WTC11 (cell line): ENCODE measurements at regions of chr11 and their contacts with region 1.

Region 1: DNA sequence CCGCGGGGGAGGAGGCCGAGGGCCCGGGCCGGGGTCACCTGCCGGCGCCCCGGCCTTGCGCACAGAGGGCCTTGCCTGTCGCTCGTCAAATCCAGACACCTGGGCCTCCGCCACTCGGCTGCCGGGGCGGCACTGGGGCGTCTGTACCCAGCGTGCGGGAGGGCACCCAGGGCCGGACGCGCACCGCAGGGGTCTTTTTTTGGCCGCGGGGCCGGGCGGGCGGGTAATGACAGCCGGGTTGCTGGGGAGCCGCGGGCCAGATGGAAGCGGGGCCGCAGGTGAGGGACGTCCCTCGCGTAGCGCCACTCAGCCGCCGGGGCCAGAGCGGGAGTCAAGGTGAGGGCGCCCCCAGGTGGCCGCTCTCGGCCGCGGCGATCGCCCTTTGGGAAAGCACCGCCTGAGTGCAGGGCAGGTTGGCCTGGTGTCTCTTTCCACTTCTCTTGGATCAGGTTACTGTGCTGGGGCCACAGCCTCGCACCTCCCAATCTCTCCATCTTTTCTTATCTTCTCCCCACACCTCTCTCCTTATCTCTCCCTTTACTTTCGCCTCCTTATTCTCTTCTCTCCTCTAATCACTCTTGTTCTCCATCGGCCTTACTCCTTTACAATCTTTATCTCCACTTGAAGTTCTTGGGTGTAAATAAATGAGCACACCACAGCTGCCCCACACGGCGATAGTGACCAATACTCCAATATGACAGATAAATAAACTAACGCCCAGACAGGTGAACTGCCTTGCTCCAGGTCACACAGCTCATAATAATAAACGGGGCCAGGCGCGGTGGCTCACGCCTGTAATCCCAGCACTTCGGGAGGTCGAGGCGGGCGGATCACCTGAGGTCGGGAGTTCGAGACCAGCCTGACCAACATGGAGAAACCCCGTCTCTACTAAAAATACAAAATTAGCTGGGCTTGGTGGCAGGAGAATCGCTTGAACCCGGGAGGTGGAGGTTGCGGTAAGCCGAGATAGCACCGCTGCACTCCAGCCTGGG is 3.7 kb downstream of the PHLDB1 start:
- DNase-seq: peak; percentile 95
- ATAC-seq: peak; percentile 41
- H3K4me3 Mint-ChIP-seq: peak overlapping the region; percentile 57
- H3K27ac Mint-ChIP-seq: no peak overlapping the region
- H3K4me1 Mint-ChIP-seq: peaks cover 60% of the 10 kb centered on the region
- H3K27me3 Mint-ChIP-seq: peaks cover 60% of the 10 kb centered on the region
- CTCF ChIP-seq: peak; percentile 87

Region 2: GRCh38 chr11:118621071-118621783 is 10.1 kb after region 1 on chr11:
- CTCF ChIA-PET with region 1: interaction called, 29 read pairs
- POLR2A ChIA-PET with region 1: interaction called, 6 read pairs
- DNase-seq: peak; percentile 90
- ATAC-seq: peak; percentile 87
- H3K4me3 Mint-ChIP-seq: peak overlapping the region; percentile 85
- H3K27ac Mint-ChIP-seq: peak overlapping the region; percentile 86
- H3K4me1 Mint-ChIP-seq: peaks cover 60% of the 10 kb centered on the region
- H3K27me3 Mint-ChIP-seq: no peaks in the 10 kb centered on the region
- CTCF ChIP-seq: no peak

Region 3: DNA sequence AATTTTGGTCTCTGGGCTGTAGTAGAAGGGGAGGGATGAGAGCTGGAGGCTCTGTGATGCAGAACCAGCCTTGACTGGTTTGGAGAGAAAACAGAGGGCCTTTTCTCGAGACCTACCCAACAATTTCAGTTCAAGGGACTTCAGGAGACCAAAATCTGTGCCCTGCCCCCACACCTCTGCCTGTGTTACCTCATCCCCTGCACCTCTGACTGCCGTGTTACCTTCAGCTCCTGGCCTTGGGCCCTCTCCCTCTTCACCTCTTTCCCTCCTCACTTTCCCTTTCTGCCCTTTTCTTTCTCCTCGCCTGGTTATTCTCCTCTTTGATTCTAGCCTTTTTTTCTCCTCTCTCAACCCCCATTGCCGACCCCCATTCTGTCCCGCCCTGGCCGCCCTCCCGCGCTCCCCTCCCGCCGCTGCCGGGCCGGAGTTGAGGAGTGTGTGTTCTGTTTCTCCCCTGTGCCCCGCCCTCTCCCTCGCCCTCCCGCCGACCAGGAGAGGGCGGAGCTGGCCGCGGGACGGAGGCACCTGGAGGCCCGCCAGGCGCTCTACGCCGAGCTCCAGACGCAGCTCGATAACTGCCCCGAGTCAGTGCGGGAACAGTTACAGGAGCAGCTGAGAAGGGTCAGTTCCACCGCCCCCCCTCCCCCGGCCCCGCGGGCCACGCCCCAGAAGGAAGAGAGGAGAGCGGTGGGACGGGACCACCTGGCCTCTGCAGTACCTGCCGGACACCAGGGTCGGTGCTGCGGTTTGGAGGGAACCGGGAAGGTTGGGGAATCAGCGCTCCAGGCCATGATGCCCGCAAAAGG is 23.5 kb after region 1 on chr11:
- CTCF ChIA-PET with region 1: interaction called, 127 read pairs
- POLR2A ChIA-PET with region 1: interaction called, 34 read pairs
- DNase-seq: peak; percentile 93
- ATAC-seq: peak; percentile 90
- H3K4me3 Mint-ChIP-seq: peak overlapping the region; percentile 73
- H3K27ac Mint-ChIP-seq: peak overlapping the region; percentile 93
- H3K4me1 Mint-ChIP-seq: peaks cover 29% of the 10 kb centered on the region
- H3K27me3 Mint-ChIP-seq: no peaks in the 10 kb centered on the region
- CTCF ChIP-seq: no peak